ENCODE measurements at regions of chr2 and their contacts with region 1.

Region 1: DNA sequence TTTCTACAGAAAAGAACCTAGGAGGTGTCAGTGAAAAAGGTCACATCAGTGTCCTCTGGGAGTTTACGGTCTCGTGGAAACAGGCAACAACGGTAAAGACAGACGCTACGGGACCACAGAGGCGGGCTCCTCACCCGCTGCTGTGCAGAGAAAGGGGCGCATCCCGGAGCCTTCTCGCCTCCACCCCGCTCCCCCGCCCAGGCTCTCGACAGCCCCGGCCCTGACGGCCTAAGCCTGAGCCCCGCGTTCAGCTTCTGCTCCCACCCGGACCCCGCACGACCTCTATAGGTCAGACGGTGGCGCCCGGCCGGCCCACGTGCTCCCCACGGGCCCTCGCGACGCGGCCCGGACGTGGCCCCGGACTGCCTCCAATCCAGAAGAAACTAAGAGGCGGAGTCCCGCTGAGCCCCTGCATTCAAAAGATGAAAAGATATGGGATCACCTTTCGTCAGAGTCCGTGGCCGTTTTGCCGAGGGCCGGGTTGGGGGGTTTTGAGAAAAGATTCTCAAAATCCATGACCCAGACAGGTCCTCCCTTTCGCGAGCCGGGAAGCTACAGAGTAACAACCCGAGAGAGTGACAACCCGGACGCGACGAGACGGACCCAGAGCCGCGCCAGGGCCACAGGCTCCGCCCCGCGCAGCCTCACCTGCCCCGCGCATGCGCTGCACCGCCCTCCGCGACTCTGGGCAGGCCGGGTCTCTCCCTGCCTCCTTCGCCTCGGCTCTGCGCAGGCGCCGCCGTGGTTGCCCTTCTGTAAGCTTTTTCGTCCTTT is at the start of gene ZC3H8:
- DNase-seq: peak; percentile 89 to 99 (median 93)

Region 2: DNA sequence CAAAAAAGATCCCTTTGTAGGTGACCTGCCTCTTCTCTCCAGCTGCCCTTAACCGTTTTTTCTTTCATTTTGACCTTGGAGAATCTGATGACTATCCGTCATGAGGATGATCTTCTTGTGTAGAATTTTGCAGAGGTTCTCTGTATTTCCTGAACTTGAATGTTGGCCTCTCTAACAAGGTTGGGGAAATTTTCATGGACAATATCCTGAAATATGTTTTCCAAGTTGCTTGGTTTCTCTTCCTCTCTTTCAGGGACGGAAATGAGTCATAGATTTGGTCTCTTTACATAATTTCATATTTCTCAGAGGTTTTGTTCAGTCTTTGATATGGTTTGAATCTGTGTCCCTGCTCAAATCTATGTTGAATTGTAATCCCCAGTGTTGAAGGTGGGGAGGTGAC is 33.8 kb before region 1 on chr2:
- intact Hi-C with region 1: no loop called
- DNase-seq: no peak

Region 3: DNA sequence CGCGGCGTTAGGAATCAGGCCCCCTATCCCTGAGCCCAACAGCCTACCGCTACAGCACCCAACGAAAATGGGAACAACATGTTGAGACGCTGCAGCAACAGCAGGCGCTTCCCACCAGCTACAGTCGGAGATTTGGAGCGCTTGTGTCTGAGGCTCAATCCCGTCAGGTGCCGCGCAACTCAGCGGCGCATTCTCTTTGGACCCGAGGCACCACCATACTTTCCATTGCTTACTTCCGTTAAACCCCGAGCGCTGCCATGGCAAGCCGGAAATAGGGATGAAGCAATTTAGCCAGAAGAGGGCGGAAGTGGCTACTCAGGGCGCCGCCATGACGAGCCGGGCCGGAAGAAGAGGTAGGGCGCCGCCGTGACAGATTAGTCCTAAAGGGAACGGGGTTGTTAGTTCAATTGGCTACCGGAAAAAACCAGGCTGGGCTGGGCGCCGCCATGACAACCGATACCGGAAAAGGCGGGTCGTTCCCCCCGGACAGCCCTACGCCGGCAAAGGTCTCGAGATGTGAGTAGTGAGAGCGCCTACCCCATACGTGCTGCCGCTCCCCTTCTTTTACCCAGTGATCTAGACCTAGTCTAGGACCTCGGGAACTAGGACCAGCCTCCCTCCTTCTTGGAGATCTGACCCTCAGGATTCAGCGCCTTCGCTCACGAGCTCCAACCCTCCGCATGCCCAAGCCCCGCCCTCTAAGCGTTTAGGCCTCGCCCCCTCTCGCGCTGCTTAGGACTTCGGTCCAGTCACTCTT is 329.7 kb after region 1 on chr2 and contains the start of gene CHCHD5:
- intact Hi-C with region 1: loop called (anchors 5 kb)
- DNase-seq: peak; percentile 90 to 99 (median 96)

Measured in posterior cingulate gyrus (tissue), 11 donors.